Posterior vena cava (tissue), 2 donors: ENCODE measurements at regions of chr22 and their contacts with region 1.

Region 1: GRCh38 chr22:24315367-24315966 is 44.8 kb downstream of the SPECC1L start:
- DNase-seq: no peak

Region 2: GRCh38 chr22:23521441-23522113 is 793.9 kb before region 1 on chr22:
- intact Hi-C with region 1: loop called in 1 of 2 experiments (anchors 10 kb)
- DNase-seq: peak; percentile 96